CD8-positive, alpha-beta T cell (primary cell): ENCODE measurements at regions of chr5 and their contacts with region 1.

Region 1: DNA sequence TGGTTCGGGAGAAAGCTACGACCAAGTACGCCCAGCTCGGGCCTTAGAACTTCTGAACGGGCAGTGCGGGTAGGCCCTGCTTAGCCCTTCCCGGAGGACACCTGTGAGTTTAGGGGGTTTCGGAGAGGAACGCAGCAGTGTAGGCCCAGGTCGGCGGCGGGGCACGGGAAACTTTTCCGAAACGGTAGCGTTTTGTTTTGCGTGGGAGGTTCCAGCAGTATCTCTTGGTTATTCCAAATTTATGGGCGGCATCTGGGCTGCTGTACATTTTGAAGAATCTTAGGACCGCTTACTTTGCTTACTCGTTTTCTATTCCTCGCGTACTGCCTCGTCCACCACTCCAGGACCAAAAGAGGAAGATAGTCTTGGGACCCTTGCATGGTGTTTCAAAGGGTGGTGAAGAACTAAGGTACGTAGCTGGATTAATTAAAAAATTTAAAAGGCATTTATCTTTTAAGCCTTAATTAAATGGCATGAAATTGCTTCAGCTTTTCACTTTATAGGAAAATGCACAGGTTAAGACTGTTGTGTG is 492 bp downstream of the TENT2 start:
- DNase-seq: no peak
- ATAC-seq: no peak
- H3K4me3 ChIP-seq: peak overlapping the region; percentile 71 to 97
- H3K4me3 Mint-ChIP-seq: peak overlapping the region; percentile 96
- H3K27ac ChIP-seq: peak overlapping the region; percentile 89 to 91
- H3K27ac Mint-ChIP-seq: peak overlapping the region; percentile 98
- H3K4me1 ChIP-seq: peaks cover 26% of the 10 kb centered on the region
- H3K4me1 Mint-ChIP-seq: peaks cover 39% of the 10 kb centered on the region
- H3K27me3 ChIP-seq: no peaks in the 10 kb centered on the region
- H3K27me3 Mint-ChIP-seq: peaks cover 9% of the 10 kb centered on the region
- CTCF ChIP-seq: no peak

Region 2: DNA sequence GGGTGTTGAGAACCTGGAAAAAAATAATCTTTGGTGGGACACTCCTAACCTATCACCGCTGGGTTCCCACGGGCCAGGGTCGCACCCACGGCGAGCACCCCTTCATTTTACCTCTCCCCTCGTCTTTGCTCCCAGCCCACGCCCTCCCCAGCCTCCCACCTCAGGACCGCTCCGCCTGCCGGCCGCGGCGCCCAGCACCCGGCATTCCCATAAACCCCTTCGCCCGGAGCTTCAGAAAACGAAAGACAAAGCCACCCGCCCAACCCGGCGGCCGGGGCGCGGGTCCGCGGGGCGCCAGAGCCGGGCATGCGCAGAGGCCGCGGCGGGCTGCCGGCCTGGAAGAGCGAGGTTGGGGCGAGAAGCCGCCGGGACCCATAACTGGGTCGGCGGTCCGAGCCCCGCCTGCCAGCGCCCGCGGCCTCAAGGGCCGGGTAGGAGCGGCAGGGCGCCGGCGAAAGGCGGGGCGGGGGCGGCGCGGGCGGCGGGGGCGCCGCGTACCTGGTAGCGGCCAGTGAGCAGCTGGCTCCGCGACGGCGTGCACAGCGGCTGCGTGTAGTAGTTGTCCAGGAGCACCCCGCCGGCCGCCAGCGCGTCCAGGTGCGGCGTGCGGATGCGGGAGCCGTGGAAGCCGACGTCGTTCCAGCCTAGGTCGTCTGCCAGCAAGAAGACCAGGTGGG is 628.2 kb before region 1 on chr5:
- CTCF ChIA-PET with region 1: no interaction called
- POLR2A ChIA-PET with region 1: no interaction called
- intact Hi-C with region 1: loop called in 1 of 2 experiments (anchors 5 kb)
- DNase-seq: peak; percentile 55 to 90 (median 75)
- ATAC-seq: peak; percentile 74
- H3K4me3 ChIP-seq: peak overlapping the region; percentile 54 to 68
- H3K4me3 Mint-ChIP-seq: peak overlapping the region; percentile 94
- H3K27ac ChIP-seq: peak overlapping the region; percentile 40 to 75
- H3K27ac Mint-ChIP-seq: peak overlapping the region; percentile 92
- H3K4me1 ChIP-seq: peaks cover 14% of the 10 kb centered on the region
- H3K4me1 Mint-ChIP-seq: peaks cover 28% of the 10 kb centered on the region
- H3K27me3 ChIP-seq: no peaks in the 10 kb centered on the region
- H3K27me3 Mint-ChIP-seq: no peaks in the 10 kb centered on the region
- CTCF ChIP-seq: no peak

Region 3: GRCh38 chr5:79235634-79236363 is 376.9 kb before region 1 on chr5 and contains the start of gene JMY:
- CTCF ChIA-PET with region 1: no interaction called
- POLR2A ChIA-PET with region 1: no interaction called
- intact Hi-C with region 1: loop called (anchors 5 kb)
- DNase-seq: peak; percentile 72 to 94 (median 85)
- ATAC-seq: peak; percentile 86
- H3K4me3 ChIP-seq: peak within 1 kb of the TSS; percentile 79 to 81
- H3K4me3 Mint-ChIP-seq: peak within 1 kb of the TSS; percentile 97
- H3K27ac ChIP-seq: peak within 1 kb of the TSS; percentile 91 to 98
- H3K27ac Mint-ChIP-seq: peak within 1 kb of the TSS; percentile 96
- H3K4me1 ChIP-seq: peaks cover 28% of the 10 kb centered on the region
- H3K4me1 Mint-ChIP-seq: peaks cover 34% of the 10 kb centered on the region
- H3K27me3 ChIP-seq: no peaks in the 10 kb centered on the region
- H3K27me3 Mint-ChIP-seq: no peaks in the 10 kb centered on the region
- CTCF ChIP-seq: no peak
- total RNA-seq, gene JMY: 104 TPM

Region 4: DNA sequence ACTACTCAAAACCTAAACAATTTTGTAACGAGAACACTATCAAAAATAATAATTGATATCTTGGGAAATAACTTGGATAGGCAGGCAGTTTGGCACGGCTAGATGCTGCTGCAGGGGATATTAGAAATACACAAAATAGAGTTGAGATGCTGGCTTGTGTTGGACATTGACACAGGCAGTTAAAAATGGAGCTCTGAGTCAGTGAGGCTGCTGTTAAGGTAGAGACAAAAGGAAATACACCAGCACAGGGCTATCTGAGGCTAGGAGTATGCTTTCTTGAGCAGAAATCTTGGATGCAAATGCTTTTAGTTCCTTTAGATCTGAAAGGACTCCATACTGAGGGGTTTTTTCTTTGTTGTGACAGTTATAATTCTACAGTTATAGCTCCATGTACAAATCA is 16.1 kb after region 1 on chr5:
- CTCF ChIA-PET with region 1: no interaction called
- POLR2A ChIA-PET with region 1: interaction called, 3 read pairs
- intact Hi-C with region 1: loop called in 1 of 2 experiments (anchors 2 kb)
- DNase-seq: no peak
- ATAC-seq: no peak
- H3K4me3 ChIP-seq: no peak overlapping the region
- H3K4me3 Mint-ChIP-seq: no peak overlapping the region
- H3K27ac ChIP-seq: peak overlapping the region in 1 of 2 experiments; percentile 45
- H3K27ac Mint-ChIP-seq: no peak overlapping the region
- H3K4me1 ChIP-seq: peaks cover 9% of the 10 kb centered on the region
- H3K4me1 Mint-ChIP-seq: peaks cover 50% of the 10 kb centered on the region
- H3K27me3 ChIP-seq: no peaks in the 10 kb centered on the region
- H3K27me3 Mint-ChIP-seq: no peaks in the 10 kb centered on the region
- CTCF ChIP-seq: no peak

Region 5: GRCh38 chr5:79990598-79991507 is 378.1 kb after region 1 on chr5 and contains the start of gene MTX3:
- CTCF ChIA-PET with region 1: no interaction called
- POLR2A ChIA-PET with region 1: no interaction called
- intact Hi-C with region 1: loop called (anchors 1 to 5 kb)
- DNase-seq: peak; percentile 75 to 93 (median 89)
- ATAC-seq: peak; percentile 95
- H3K4me3 ChIP-seq: peak within 1 kb of the TSS; percentile 60 to 72
- H3K4me3 Mint-ChIP-seq: peak within 1 kb of the TSS; percentile 86
- H3K27ac ChIP-seq: peak within 1 kb of the TSS; percentile 51 to 70
- H3K27ac Mint-ChIP-seq: peak within 1 kb of the TSS; percentile 88
- H3K4me1 ChIP-seq: peaks cover 20% of the 10 kb centered on the region
- H3K4me1 Mint-ChIP-seq: peaks cover 32% of the 10 kb centered on the region
- H3K27me3 ChIP-seq: no peaks in the 10 kb centered on the region
- H3K27me3 Mint-ChIP-seq: peaks cover 11% of the 10 kb centered on the region
- CTCF ChIP-seq: no peak
- total RNA-seq, gene MTX3: 26.2 to 27.1 TPM

Region 6: DNA sequence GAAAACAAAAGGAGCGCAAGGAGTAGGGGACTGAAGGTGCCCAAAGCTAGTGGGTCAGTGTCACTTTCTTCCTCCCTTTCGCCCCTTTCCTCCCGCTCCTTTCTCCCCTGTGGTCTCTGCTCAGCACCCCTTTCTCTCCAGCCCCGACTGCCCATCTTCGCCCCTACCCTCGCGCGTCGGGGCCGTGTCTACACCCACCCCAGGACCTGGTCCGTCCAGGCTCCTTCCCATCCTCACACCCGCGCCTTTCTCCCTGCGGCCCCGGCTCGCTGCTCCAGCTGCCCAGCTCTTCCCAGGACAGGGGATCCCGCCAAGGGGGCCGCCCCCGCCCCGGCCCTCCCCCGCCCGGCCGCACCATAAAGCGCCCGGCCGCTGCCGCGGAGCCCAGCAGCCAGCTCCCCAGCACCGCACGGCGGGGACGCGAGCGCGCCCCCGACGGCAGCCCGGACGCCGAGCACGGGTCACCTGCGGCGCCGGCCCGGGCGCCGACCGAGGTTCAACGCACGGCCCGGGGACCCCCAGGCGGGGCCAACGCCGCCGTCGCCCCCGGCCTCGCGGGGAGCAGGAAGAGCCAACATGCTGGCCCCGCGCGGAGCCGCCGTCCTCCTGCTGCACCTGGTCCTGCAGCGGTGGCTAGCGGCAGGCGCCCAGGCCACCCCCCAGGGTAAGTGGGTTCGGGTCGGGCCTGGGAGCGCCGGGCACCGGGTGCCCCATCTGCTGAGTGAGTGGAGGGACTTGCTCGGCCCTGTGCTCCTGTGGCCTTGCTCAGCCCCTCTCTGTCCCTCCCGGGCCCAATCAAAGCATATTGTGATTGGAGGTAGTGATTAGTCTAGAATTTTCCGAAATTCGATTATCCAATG is 422.5 kb after region 1 on chr5 and contains the start of gene THBS4:
- CTCF ChIA-PET with region 1: no interaction called
- POLR2A ChIA-PET with region 1: no interaction called
- intact Hi-C with region 1: no loop called
- DNase-seq: peak in 1 of 9 experiments; percentile 6
- ATAC-seq: no peak
- H3K4me3 ChIP-seq: no peak within 1 kb of the TSS
- H3K4me3 Mint-ChIP-seq: peak within 1 kb of the TSS; percentile 66
- H3K27ac ChIP-seq: no peak within 1 kb of the TSS
- H3K27ac Mint-ChIP-seq: no peak within 1 kb of the TSS
- H3K4me1 ChIP-seq: peaks cover 9% of the 10 kb centered on the region
- H3K4me1 Mint-ChIP-seq: peaks cover 19% of the 10 kb centered on the region
- H3K27me3 ChIP-seq: peaks cover under 1 to 27% of the 10 kb centered on the region in 2 experiments
- H3K27me3 Mint-ChIP-seq: peaks cover 57% of the 10 kb centered on the region
- CTCF ChIP-seq: no peak
- total RNA-seq, gene THBS4: not detected